K562 (cell line): ENCODE measurements at regions of chr13 and their contacts with region 1.

Region 1: GRCh38 chr13:75482070-75482819 is at the start of gene TBC1D4:
- DNase-seq: peak; percentile 55 to 78 (median 63)
- ATAC-seq: peak; percentile 89
- H3K4me3 ChIP-seq: peak within 1 kb of the TSS; percentile 67
- H3K27ac ChIP-seq: peak within 1 kb of the TSS; percentile 55; the same call in 1 of the 3 replicates
- H3K4me1 ChIP-seq: peaks cover 0 to 20% of the 10 kb centered on the region in 2 experiments; a peak in 4 of 5 replicates
- H3K27me3 ChIP-seq: no peaks in the 10 kb centered on the region
- CTCF ChIP-seq: peak; percentile 61 to 71 (median 64)
- EP300 ChIP-seq: no peak
- POLR2A ChIP-seq: no peak
- RAD21 ChIP-seq: peak; percentile 56 to 64
- polyA plus RNA-seq, gene TBC1D4: 2.8 to 2.9 TPM

Region 2: DNA sequence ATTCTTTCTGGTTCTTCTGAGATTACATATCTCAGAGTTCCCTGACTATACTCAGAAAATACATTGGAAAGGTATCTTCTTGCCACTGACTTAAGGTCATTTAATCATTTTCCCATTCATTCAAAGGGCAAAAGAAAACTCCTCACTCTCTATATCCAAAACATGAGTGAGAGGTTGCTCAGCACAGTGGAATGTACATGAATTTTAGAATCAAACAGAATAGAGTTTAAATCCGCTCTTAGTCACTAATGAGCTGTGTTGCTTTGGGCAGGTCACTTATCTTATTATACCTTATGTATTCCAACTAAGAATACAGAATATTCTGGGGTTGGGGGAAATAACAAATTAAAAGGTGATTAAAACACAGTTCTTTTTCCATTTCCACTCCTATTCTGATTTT is 895.4 kb before region 1 on chr13:
- CTCF ChIA-PET with region 1: no interaction called
- POLR2A ChIA-PET with region 1: no interaction called
- in situ Hi-C with region 1: no loop called
- intact Hi-C with region 1: no loop called
- DNase-seq: no peak
- ATAC-seq: no peak
- H3K4me3 ChIP-seq: no peak overlapping the region
- H3K27ac ChIP-seq: no peak overlapping the region
- H3K4me1 ChIP-seq: no peaks in the 10 kb centered on the region
- H3K27me3 ChIP-seq: no peaks in the 10 kb centered on the region
- CTCF ChIP-seq: no peak
- EP300 ChIP-seq: no peak
- POLR2A ChIP-seq: no peak
- RAD21 ChIP-seq: no peak

Region 3: GRCh38 chr13:75372517-75372916 is 109.7 kb before region 1 on chr13:
- CTCF ChIA-PET with region 1: interaction called, 3 read pairs
- POLR2A ChIA-PET with region 1: no interaction called
- in situ Hi-C with region 1: no loop called
- intact Hi-C with region 1: loop called (anchors 1 kb)
- DNase-seq: peak; percentile 13 to 38 (median 22)
- ATAC-seq: peak; percentile 83
- H3K4me3 ChIP-seq: no peak overlapping the region
- H3K27ac ChIP-seq: peak overlapping the region; percentile 41; the same call in 2 of the 3 replicates
- H3K4me1 ChIP-seq: peaks cover 0 to 15% of the 10 kb centered on the region in 2 experiments; a peak in 3 of 5 replicates
- H3K27me3 ChIP-seq: no peaks in the 10 kb centered on the region
- CTCF ChIP-seq: peak; percentile 22 to 51 (median 30); a peak in 3 of 6 replicates
- EP300 ChIP-seq: no peak
- POLR2A ChIP-seq: no peak
- RAD21 ChIP-seq: peak; percentile 40 to 53

Region 4: GRCh38 chr13:75432045-75432444 is 50.2 kb before region 1 on chr13:
- CTCF ChIA-PET with region 1: no interaction called
- POLR2A ChIA-PET with region 1: no interaction called
- in situ Hi-C with region 1: no loop called
- intact Hi-C with region 1: loop called (anchors 5 kb)
- DNase-seq: peak in 1 of 4 experiments; percentile 9
- ATAC-seq: peak; percentile 66
- H3K4me3 ChIP-seq: no peak overlapping the region
- H3K27ac ChIP-seq: no peak overlapping the region
- H3K4me1 ChIP-seq: no peaks in the 10 kb centered on the region; a peak in 1 of 5 replicates
- H3K27me3 ChIP-seq: no peaks in the 10 kb centered on the region
- CTCF ChIP-seq: peak in 2 of 3 experiments; percentile 27 to 34; a peak in 2 of 6 replicates
- EP300 ChIP-seq: no peak
- POLR2A ChIP-seq: no peak
- RAD21 ChIP-seq: peak in 1 of 2 experiments; percentile 45; a peak in 3 of 4 replicates

Region 5: GRCh38 chr13:75549262-75550158 is 67.3 kb after region 1 on chr13 and contains the start of gene UCHL3:
- CTCF ChIA-PET with region 1: no interaction called
- POLR2A ChIA-PET with region 1: no interaction called
- in situ Hi-C with region 1: no loop called
- intact Hi-C with region 1: loop called (anchors 2 kb)
- DNase-seq: peak; percentile 92 to 96 (median 93)
- ATAC-seq: peak; percentile 94
- H3K4me3 ChIP-seq: peak within 1 kb of the TSS; percentile 84
- H3K27ac ChIP-seq: peak within 1 kb of the TSS; percentile 95
- H3K4me1 ChIP-seq: peaks cover 6% of the 10 kb centered on the region in 2 experiments; a peak in 3 of 5 replicates
- H3K27me3 ChIP-seq: no peaks in the 10 kb centered on the region
- CTCF ChIP-seq: peak; percentile 85 to 99 (median 96)
- EP300 ChIP-seq: no peak
- POLR2A ChIP-seq: peak; percentile 77
- RAD21 ChIP-seq: peak; percentile 72 to 79
- polyA plus RNA-seq, gene UCHL3: 108 to 112 TPM

Region 6: GRCh38 chr13:75666646-75667351 is 184.6 kb after region 1 on chr13:
- CTCF ChIA-PET with region 1: no interaction called
- POLR2A ChIA-PET with region 1: no interaction called
- in situ Hi-C with region 1: no loop called
- intact Hi-C with region 1: loop called (anchors 10 kb)
- DNase-seq: no peak
- ATAC-seq: no peak
- H3K4me3 ChIP-seq: no peak overlapping the region
- H3K27ac ChIP-seq: no peak overlapping the region
- H3K4me1 ChIP-seq: no peaks in the 10 kb centered on the region
- H3K27me3 ChIP-seq: no peaks in the 10 kb centered on the region
- CTCF ChIP-seq: no peak
- EP300 ChIP-seq: no peak
- POLR2A ChIP-seq: no peak
- RAD21 ChIP-seq: no peak